Cardiac septum (tissue), 1 donor: ENCODE measurements at regions of chr12 and their contacts with region 1.

Region 1: DNA sequence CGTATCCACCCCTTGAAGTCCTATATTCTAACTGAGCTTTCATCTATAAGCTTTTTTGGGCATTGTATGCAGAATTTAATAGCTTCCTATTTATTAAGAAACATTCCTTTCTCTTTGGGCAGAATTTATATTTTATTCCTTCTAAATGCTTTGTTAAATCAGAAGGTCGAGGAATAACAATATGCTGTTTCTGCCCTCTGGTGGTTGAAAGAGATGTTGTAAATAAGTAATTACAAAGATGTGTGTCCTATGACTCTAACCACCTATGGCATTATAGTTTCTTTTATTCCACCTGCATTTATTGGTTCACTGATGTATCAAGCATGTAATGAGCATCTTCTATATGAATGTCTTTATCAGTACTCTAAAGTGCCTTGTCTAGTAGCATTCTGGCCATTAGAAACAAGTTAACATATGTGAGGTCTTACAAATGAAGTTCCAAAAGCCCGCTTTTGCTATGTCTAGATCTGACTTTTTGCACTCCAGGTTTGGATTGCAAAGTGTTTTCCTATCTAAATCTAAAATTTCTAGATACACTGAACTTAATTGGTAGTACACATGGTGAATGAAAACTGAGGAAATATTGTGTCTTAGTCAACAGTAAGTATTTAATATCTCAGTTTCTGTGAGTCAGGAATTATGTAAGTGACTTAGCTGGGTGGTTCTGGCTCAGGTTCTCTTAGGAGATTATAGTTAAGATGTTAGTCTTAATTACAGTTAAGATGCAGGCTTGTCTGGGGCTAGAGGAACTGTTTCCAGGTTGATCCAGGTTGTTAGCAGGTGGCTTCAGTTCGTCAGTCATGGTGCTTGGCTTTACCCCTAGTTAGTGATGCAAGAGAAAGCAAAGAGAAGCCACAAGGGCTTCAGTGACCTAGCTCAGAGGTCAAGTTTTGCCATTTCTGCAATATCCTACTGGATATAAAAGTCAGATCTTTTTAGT is 57.5 kb downstream of the PLEKHA5 start:
- DNase-seq: no peak

Region 2: GRCh38 chr12:18430425-18431048 is 756.5 kb before region 1 on chr12:
- intact Hi-C with region 1: loop called (anchors 5 kb)
- DNase-seq: no peak

Region 3: DNA sequence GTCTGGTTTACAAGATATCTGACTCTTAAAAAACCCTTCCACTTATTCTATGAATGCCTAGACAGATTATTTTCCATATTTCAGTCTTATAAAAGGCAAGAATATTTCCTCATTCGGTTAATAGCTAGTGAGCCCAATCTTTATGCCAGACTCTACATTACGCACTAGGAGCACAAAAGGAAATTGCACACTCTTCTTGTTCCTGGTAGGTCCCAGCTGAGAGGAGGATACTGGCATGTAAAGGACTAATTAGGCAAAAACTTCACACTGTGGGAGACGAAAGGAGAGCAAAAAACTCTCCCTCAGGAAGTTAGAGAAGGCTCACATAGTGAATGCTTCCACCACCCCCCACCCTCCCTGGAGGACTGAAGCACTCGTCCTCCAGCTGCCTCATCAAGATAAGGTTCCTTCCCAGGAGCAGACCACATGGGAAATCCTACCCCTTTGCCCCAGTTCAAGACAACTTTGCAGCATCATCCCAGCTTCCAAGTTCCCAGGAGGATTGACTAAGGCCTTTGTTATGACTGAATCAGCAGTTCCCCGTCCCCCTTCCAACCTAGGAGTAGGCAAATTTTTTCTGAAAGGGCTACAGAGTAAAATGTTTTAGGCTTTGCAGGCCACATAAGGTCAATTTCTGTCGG is 434.6 kb before region 1 on chr12:
- intact Hi-C with region 1: loop called (anchors 10 kb)
- DNase-seq: no peak

Region 4: DNA sequence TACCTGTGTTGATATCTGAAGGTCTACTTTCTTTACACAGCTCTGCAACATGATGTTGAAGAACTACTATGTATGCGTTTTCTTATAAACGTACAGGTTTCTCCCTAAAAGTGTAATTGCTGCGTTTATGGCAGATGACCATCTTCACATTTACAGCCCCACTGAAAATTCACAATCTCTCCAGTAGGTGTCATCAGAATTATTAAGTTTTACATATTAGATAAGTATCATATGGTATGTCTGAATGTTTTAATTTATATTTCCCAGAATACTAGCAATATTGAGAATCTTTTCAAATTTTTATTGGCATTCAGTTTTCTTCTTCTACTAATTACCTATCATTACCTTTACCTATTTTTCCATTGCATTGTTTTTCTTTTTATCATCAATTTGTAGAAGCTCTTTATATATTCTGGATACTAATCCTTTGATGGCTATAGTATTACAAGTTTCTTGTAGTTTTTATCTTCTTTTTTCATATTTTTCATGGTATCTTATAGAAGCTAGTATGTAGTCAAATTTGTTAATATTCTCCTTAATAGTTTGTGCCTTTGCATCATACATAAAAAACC is 325.6 kb before region 1 on chr12:
- intact Hi-C with region 1: loop called (anchors 5 kb)
- DNase-seq: no peak

Region 5: DNA sequence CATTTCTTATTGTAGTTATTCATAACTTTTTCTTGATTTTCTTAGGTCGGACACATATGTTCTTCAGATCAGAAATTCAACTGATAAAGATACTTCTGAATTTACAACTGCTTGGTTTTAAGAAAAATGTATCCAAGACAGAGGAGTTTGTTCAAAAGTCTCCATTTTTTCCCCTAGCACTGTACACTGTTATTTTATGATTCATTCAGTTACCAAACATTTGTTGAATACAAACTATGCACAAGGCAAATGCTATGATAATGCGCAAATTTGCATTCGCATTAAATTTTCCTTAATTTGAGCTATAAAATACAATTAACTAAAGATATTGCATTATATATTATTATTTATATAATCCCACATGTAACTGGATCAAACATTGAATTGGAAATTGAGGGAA is 67.6 kb before region 1 on chr12:
- intact Hi-C with region 1: no loop called
- DNase-seq: no peak

Region 6: GRCh38 chr12:19129486-19130223 is 57.3 kb before region 1 on chr12 and contains the start of gene PLEKHA5:
- intact Hi-C with region 1: loop called (anchors 2 kb)
- DNase-seq: peak; percentile 84
- total RNA-seq, gene PLEKHA5: 65.4 TPM